Sigmoid colon (tissue), 7 donors: ENCODE measurements at regions of chr15 and their contacts with region 1.

Region 1: GRCh38 chr15:34708422-34708821 is 46.4 kb downstream of the GJD2 start:
- DNase-seq: no peak
- H3K4me3 ChIP-seq: no peak overlapping the region
- H3K27ac ChIP-seq: no peak overlapping the region
- H3K4me1 ChIP-seq: no peaks in the 10 kb centered on the region
- H3K27me3 ChIP-seq: no peaks in the 10 kb centered on the region
- CTCF ChIP-seq: peak in 3 of 4 experiments; percentile 15 to 51 (median 47)
- EP300 ChIP-seq: no peak
- POLR2A ChIP-seq: no peak

Region 2: DNA sequence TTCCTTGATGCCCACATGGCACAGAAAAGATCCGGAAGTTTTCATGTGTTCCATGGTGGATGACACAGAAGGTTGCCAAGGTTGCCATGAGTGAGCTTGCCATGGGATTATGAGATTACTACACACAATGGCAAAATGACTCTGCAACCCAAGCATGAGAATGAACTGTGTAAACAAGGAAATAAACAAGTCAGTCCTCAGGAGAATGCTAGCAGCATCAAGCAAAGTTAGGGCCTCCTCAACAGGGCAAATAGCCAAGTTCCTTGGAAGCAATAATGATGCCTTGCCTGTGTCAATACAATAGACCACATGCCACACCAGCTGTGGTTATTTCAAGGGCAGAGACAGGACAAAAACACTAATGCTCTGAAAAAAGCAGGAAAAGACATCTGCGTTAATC is 219.3 kb after region 1 on chr15:
- intact Hi-C with region 1: loop called (anchors 5 kb)
- DNase-seq: no peak
- H3K4me3 ChIP-seq: no peak overlapping the region
- H3K27ac ChIP-seq: no peak overlapping the region
- H3K4me1 ChIP-seq: no peaks in the 10 kb centered on the region
- H3K27me3 ChIP-seq: no peaks in the 10 kb centered on the region
- CTCF ChIP-seq: no peak
- EP300 ChIP-seq: no peak
- POLR2A ChIP-seq: no peak